CD4-positive, alpha-beta memory T cell (primary cell): ENCODE measurements at regions of chr16 and their contacts with region 1.

Region 1: DNA sequence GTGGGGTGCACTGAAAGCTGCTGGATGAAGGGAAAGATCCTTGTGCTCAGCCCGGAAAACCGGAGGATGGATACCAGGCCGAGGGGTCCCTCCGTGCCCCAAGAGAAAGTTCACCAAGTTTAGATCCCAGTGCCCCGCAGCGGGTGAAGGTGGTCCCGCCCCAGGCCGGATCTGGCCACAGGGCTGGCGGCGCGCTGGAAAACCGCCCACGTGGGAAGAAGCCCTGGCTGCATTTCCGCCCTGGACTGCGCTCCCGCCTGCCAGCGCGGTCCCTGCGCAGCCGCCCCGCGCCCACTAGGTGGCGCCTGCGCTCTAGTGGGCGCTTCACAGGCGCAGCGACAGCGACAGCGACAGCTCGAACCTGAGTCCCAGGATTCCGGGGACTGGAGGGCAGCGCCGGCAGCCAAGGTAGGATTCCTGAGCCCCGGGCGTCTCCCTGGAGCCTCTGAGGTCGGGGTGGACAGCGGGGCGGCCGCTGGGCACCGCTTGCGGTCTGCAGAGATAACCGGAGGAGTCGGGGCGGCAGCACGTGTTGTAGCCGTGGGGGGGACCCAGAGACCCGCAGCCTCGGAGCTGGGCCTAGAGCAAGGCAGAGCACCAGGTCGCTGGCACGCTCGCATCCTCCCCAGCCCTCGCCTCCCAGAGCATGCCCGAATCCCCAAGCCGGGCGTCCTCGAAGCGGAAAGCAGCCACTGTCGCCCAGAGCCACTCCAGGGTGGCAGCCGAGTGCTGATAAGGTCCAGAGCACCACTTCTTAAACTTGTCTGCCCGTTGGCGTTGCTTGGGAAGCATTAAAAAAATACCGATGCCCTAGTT is at the start of gene CHD9:
- DNase-seq: peak; percentile 69 to 82 (median 77)
- H3K4me3 ChIP-seq: peak within 1 kb of the TSS; percentile 57 to 87
- H3K4me3 Mint-ChIP-seq: peak within 1 kb of the TSS; percentile 70 to 95 (median 86)
- H3K27ac ChIP-seq: peak within 1 kb of the TSS; percentile 53
- H3K27ac Mint-ChIP-seq: peak within 1 kb of the TSS; percentile 31 to 94 (median 73)
- H3K4me1 ChIP-seq: peaks cover 21% of the 10 kb centered on the region
- H3K4me1 Mint-ChIP-seq: peaks cover 9 to 37% (median 13%) of the 10 kb centered on the region in 4 donors
- H3K27me3 ChIP-seq: no peaks in the 10 kb centered on the region
- H3K27me3 Mint-ChIP-seq: no peaks in the 10 kb centered on the region
- total RNA-seq, gene CHD9: 47.0 to 49.7 TPM

Region 2: DNA sequence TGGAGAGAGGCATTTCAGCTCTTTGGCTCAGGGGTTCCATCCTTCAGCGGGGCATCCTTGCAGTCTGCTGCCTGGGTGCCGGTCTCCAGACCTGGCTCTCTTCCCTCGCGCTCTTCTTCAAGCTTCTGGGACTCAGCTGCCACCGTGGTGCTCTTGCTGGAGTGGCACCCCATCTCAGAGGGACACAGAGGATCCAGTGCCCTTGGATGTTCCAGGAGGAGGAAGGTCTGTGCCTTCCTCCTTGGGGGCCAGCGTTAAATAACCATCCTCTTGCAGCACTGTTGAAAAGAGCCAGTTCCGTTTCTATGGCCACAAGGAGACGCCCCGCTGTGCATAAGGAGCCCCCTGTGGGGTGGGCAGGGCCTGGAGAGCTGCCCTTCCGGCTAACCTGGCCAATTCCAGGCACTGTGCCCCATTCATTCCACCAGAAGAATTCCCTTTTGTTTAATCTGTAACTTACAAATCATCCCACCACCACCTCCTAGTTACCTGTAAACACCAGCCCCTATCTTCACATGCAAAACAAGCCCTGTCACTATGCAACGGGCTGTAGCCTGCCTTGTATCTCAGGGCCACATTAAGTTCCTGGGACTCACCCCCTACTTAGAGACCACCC is 10.8 kb before region 1 on chr16:
- CTCF ChIA-PET with region 1: interaction called, 11 read pairs
- POLR2A ChIA-PET with region 1: no interaction called
- intact Hi-C with region 1: no loop called
- DNase-seq: no peak
- H3K4me3 ChIP-seq: no peak overlapping the region
- H3K4me3 Mint-ChIP-seq: no peak overlapping the region
- H3K27ac ChIP-seq: no peak overlapping the region
- H3K27ac Mint-ChIP-seq: no peak overlapping the region
- H3K4me1 ChIP-seq: no peaks in the 10 kb centered on the region
- H3K4me1 Mint-ChIP-seq: peaks cover 0 to 4% (median 0%) of the 10 kb centered on the region in 4 donors
- H3K27me3 ChIP-seq: no peaks in the 10 kb centered on the region
- H3K27me3 Mint-ChIP-seq: peaks cover 5 to 8% of the 10 kb centered on the region in 2 donors

Region 3: DNA sequence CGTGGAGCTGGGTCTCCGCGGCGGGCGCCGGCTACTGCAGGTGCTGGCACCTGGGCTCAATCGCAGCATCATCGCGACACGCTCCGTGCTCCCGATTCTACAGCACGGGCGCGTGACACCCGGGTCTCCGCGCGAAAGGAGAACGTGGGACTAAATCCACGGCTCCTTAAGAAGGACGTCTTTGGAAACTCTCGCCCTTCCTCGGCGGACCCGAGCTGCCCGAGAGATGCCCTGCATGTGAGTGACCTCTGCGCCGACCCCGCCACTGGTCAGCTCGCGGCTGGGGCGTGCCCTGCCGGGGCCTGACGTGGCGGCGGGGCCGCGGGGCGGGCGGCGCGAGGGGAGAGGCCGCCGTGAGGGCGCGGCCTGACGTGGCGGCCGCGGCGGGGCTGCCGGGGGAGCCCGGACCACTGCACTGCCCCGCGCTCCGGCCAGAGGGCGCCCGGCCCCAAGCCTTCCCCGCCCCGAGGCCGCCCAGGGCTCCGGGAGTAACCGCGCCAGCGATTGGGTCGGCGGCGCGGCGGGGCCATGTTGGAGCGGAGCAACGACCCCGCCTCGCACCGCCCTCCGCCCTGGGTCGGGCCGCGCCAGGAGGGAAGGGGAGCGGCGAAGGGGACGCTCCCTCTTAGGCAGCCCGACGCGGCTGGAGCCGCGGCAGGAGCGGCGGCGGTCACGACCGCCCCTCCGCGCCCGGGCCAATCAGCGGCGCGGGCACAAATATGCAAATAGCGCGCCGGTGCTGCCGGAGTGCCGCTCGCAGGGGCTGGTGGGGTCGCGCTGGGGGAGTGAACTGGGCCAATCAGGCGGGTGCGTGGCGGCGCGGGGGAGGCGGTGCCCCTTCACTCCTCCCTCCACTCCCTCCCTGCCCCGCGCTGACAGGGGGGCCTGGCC is 75.5 kb after region 1 on chr16:
- CTCF ChIA-PET with region 1: interaction called, 17 read pairs
- POLR2A ChIA-PET with region 1: interaction called, 4 read pairs
- intact Hi-C with region 1: loop called (anchors 1 kb)
- DNase-seq: peak; percentile 95 to 96 (median 96)
- H3K4me3 ChIP-seq: peak overlapping the region; percentile 36 to 64
- H3K4me3 Mint-ChIP-seq: peak overlapping the region; percentile 74 to 91 (median 84)
- H3K27ac ChIP-seq: peak overlapping the region; percentile 55
- H3K27ac Mint-ChIP-seq: peak overlapping the region; percentile 80 to 96 (median 86)
- H3K4me1 ChIP-seq: peaks cover 8% of the 10 kb centered on the region
- H3K4me1 Mint-ChIP-seq: peaks cover 9 to 19% (median 14%) of the 10 kb centered on the region in 4 donors
- H3K27me3 ChIP-seq: no peaks in the 10 kb centered on the region
- H3K27me3 Mint-ChIP-seq: no peaks in the 10 kb centered on the region

Region 4: DNA sequence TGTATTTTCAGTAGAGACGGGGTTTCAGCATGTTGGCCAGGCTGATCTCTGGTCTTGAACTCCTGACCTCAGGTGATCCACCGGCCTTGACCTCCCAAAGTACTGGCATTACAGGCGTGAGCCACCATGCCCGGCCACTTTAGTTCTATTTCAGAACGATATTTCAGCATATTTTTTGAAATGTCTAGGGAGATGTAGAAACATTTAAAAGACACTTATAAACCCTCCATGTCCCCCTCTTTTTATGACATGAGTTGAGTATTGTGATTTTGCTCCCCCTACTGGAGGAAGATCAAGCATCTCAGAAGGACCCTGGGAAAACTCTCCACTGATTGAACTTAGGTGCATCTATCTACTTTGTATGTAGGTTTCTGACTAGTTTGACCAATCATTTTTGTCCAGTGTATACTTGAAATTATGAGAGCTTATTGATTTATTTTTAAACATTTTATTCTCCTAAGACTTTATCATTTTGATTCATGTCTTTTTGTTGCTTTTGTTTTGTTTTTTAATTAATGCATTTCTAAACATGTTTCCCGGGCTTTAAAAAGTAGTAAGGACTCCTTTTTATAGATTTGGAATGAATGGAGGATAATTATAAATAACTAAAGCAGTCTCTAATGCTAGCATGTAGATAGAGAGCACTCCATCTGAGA is 105.0 kb after region 1 on chr16:
- CTCF ChIA-PET with region 1: interaction called, 93 read pairs
- POLR2A ChIA-PET with region 1: interaction called, 4 read pairs
- intact Hi-C with region 1: loop called (anchors 1 kb)
- DNase-seq: peak; percentile 31 to 50 (median 44)
- H3K4me3 ChIP-seq: no peak overlapping the region
- H3K4me3 Mint-ChIP-seq: no peak overlapping the region
- H3K27ac ChIP-seq: no peak overlapping the region
- H3K27ac Mint-ChIP-seq: peak overlapping the region in 3 of 7 donors; percentile 3 to 57 (median 55)
- H3K4me1 ChIP-seq: no peaks in the 10 kb centered on the region
- H3K4me1 Mint-ChIP-seq: peaks cover 0 to 8% (median 6%) of the 10 kb centered on the region in 4 donors
- H3K27me3 ChIP-seq: no peaks in the 10 kb centered on the region
- H3K27me3 Mint-ChIP-seq: no peaks in the 10 kb centered on the region

Region 5: DNA sequence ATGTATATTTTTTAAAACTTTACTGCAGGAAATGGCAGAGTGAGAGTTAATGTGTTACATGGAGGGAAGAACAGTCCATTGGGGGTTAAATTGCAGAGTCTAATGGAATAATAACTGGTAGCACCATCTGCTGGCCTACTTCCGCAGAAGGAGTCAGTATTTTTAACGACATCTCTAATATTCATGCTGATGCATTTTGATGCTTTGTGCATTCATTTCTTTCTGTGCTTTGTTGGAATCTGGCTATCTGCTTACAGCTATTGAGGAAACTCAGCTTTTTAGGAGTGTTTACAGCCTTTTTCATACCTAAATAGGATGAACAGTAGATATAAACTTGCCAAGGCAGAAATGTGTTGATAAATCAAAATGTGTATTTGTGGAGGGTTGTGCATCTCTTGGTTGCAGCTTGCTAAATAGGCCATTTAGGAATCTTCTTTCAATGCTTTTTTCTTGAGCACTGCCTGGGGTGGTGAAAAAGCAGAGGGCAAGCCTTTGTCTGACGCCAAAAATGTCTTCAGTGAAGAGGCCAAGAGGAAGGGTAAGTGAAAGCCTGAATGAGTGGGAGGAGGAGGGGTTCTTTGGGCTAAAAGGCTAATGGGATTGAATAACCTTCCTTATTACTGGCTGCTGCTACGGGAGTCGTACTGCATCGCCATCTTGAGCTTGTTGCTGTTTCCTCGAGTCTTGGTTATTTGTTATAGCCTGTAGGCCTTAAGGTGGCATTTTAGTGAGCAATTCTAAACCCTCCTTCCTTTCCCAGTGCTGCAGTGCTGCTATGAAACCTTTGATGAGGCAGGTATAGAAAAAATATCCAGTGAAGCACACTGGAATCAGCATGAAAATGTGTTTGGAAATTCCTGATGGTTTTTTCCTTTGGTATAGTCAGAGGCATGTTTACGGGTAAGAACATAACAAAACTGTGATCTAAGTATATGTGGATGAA is 153.2 kb after region 1 on chr16:
- CTCF ChIA-PET with region 1: interaction called, 22 read pairs
- POLR2A ChIA-PET with region 1: no interaction called
- intact Hi-C with region 1: loop called (anchors 1 kb)
- DNase-seq: peak in 2 of 5 donors; percentile 4 to 5
- H3K4me3 ChIP-seq: no peak overlapping the region
- H3K4me3 Mint-ChIP-seq: peak overlapping the region in 7 of 8 donors; percentile 43 to 66 (median 62)
- H3K27ac ChIP-seq: no peak overlapping the region
- H3K27ac Mint-ChIP-seq: peak overlapping the region in 6 of 7 donors; percentile 33 to 79 (median 69)
- H3K4me1 ChIP-seq: no peaks in the 10 kb centered on the region
- H3K4me1 Mint-ChIP-seq: peaks cover 12 to 18% (median 15%) of the 10 kb centered on the region in 4 donors
- H3K27me3 ChIP-seq: no peaks in the 10 kb centered on the region
- H3K27me3 Mint-ChIP-seq: no peaks in the 10 kb centered on the region

Region 6: GRCh38 chr16:53282975-53283946 is 228.4 kb after region 1 on chr16:
- CTCF ChIA-PET with region 1: interaction called, 36 read pairs
- POLR2A ChIA-PET with region 1: no interaction called
- intact Hi-C with region 1: loop called (anchors 1 kb)
- DNase-seq: peak in 4 of 5 donors; percentile 4 to 20 (median 8)
- H3K4me3 ChIP-seq: no peak overlapping the region
- H3K4me3 Mint-ChIP-seq: no peak overlapping the region
- H3K27ac ChIP-seq: no peak overlapping the region
- H3K27ac Mint-ChIP-seq: no peak overlapping the region
- H3K4me1 ChIP-seq: no peaks in the 10 kb centered on the region
- H3K4me1 Mint-ChIP-seq: no peaks in the 10 kb centered on the region
- H3K27me3 ChIP-seq: no peaks in the 10 kb centered on the region
- H3K27me3 Mint-ChIP-seq: no peaks in the 10 kb centered on the region

Region 7: DNA sequence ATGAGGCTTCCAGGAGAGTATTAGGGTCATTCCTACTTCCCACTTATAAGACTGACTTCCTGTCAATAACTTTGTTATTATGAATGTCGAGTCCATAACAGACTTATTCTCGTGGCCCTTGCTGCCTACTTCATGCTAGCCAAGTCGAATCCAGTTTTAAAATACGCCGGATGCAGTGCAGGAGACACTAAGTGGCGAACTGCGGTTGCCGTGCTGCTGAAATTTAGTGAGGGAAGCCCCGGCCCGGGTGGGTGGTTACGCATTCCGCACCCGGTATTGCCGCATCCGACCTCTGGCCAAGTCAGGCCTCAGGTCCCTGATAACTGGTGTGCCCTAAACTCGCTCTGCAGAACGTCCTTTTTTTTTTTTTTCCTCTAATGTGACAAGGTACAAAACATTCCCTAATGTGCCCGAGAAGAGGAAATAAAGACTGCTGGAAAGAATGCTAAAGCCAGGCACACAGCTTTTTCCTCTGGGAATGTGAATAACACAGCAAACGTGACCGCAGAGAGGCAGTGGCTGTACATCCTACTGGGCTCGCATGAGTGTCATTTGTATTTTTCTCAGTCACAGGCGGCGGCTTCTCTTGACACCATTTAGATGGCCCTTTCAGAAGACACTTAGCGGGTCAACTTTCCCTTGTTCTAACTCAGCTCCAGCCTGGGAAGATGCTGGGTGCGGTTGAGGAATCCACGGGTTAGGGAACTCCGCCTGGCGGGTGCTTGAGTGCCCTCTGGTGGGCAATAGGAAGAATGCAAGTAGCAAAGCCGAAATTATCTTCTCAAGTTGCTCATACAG is 455.2 kb after region 1 on chr16:
- CTCF ChIA-PET with region 1: interaction called, 11 read pairs
- POLR2A ChIA-PET with region 1: interaction called, 13 read pairs
- intact Hi-C with region 1: loop called (anchors 1 kb)
- DNase-seq: peak in 4 of 5 donors; percentile 55 to 60 (median 58)
- H3K4me3 ChIP-seq: peak overlapping the region in 1 of 2 donors; percentile 2
- H3K4me3 Mint-ChIP-seq: peak overlapping the region in 7 of 8 donors; percentile 39 to 75 (median 62)
- H3K27ac ChIP-seq: no peak overlapping the region
- H3K27ac Mint-ChIP-seq: peak overlapping the region in 6 of 7 donors; percentile 17 to 79 (median 60)
- H3K4me1 ChIP-seq: peaks cover 26% of the 10 kb centered on the region
- H3K4me1 Mint-ChIP-seq: peaks cover 26 to 53% (median 39%) of the 10 kb centered on the region in 4 donors
- H3K27me3 ChIP-seq: no peaks in the 10 kb centered on the region
- H3K27me3 Mint-ChIP-seq: no peaks in the 10 kb centered on the region